ENCODE measurements at regions of chr2 and their contacts with region 1.

Region 1: GRCh38 chr2:16608661-16609643 is 56.7 kb downstream of the CYRIA start:
- DNase-seq: peak; percentile 86
- ATAC-seq: peak; percentile 95
- H3K4me3 ChIP-seq: peak overlapping the region; percentile 38 to 66 (median 60)
- H3K4me3 Mint-ChIP-seq: peak overlapping the region; percentile 87
- H3K27ac ChIP-seq: no peak overlapping the region
- H3K27ac Mint-ChIP-seq: peak overlapping the region; percentile 53
- H3K4me1 ChIP-seq: peaks cover 4 to 13% of the 10 kb centered on the region in 2 donors
- H3K4me1 Mint-ChIP-seq: peaks cover 27% of the 10 kb centered on the region
- H3K27me3 ChIP-seq: no peaks in the 10 kb centered on the region
- H3K27me3 Mint-ChIP-seq: no peaks in the 10 kb centered on the region
- CTCF ChIP-seq: peak; percentile 91

Region 2: GRCh38 chr2:16303273-16303577 is 305.7 kb before region 1 on chr2:
- CTCF ChIA-PET with region 1: no interaction called
- POLR2A ChIA-PET with region 1: no interaction called
- intact Hi-C with region 1: no loop called
- DNase-seq: no peak
- ATAC-seq: no peak
- H3K4me3 ChIP-seq: no peak overlapping the region
- H3K4me3 Mint-ChIP-seq: peak overlapping the region; percentile 32
- H3K27ac ChIP-seq: no peak overlapping the region
- H3K27ac Mint-ChIP-seq: no peak overlapping the region
- H3K4me1 ChIP-seq: no peaks in the 10 kb centered on the region
- H3K4me1 Mint-ChIP-seq: peaks cover 9% of the 10 kb centered on the region
- H3K27me3 ChIP-seq: peaks cover 0 to 4% (median 0%) of the 10 kb centered on the region in 4 experiments
- H3K27me3 Mint-ChIP-seq: peaks cover 24% of the 10 kb centered on the region
- CTCF ChIP-seq: no peak

Region 3: DNA sequence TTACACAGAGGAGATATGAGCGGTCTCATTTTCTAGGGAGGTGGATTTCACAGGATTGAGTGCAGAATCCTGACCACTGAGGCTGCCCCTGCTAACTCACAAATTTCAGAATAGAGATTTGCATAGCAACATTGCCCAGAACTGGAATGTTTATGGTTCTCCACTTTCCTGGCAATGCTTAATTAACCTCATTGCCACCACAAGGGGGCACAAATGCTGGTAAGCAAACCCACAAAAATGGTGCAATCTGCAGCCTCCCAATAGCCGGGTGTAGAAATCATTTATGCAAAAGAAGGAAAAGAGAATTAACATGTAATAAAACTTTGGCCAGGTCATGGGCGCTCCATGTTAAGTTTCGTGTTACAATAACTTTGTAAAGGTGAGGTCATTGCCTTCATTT is 55.7 kb before region 1 on chr2:
- CTCF ChIA-PET with region 1: interaction called, 4 read pairs
- POLR2A ChIA-PET with region 1: no interaction called
- intact Hi-C with region 1: loop called (anchors 1 kb)
- DNase-seq: peak; percentile 47
- ATAC-seq: no peak
- H3K4me3 ChIP-seq: no peak overlapping the region
- H3K4me3 Mint-ChIP-seq: no peak overlapping the region
- H3K27ac ChIP-seq: no peak overlapping the region
- H3K27ac Mint-ChIP-seq: no peak overlapping the region
- H3K4me1 ChIP-seq: no peaks in the 10 kb centered on the region
- H3K4me1 Mint-ChIP-seq: no peaks in the 10 kb centered on the region
- H3K27me3 ChIP-seq: no peaks in the 10 kb centered on the region
- H3K27me3 Mint-ChIP-seq: no peaks in the 10 kb centered on the region
- CTCF ChIP-seq: peak; percentile 70